ENCODE measurements at regions of chr19 and their contacts with region 1.

Region 1: DNA sequence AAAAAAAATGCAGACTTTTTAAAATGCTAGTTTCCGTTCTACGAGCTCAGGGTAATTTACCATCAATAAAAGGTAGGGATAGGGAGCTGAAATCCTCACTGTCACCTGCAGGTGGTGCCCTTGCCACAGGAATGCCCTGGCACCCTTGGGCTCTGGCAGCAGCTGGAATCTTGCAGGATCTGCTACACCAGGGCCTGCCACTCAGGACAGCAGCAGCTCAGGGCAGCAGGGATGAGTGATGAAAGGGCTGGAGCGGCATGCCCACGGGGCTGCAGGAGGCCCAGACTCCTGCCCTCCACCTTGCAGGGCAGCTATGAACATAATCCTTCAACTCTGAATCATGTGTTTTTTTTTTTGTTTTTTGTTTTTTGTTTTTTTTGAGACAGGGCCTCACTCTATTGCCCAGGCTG is 54.0 kb downstream of the GNG7 start:
- DNase-seq: peak; percentile 44
- H3K4me3 ChIP-seq: no peak overlapping the region
- H3K27ac ChIP-seq: no peak overlapping the region
- H3K27me3 ChIP-seq: peaks cover 30% of the 10 kb centered on the region
- CTCF ChIP-seq: peak; percentile 79

Region 2: DNA sequence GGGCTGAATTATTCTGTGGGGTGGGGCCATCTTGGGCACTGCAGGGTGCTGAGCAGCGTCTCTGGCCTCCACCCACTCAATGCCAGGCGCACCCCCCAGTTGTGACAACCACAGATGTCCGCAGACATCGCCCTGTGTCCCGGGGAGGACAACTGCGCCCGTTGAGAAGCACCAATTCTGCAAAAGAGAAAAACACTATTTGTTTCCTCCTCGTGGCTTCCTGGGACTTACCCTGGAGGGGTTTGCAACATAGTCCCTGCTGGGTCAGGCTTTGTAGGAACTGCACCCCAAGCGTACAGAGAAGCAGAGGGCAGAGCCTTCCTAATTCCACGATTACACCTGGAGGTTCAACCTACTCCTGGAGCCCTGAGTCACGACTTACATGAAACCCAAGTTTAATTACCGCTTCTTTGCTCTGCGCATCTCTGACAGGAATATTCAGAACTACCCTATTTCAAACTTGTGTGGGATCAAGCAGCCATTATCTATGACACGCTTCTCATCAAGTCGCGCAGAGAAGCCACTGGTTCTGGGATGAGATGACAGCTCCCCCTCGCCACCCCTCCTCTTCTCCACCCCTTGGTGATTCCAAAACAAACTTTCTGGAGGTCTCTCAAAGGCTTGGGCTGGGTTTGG is 102.4 kb after region 1 on chr19:
- CTCF ChIA-PET with region 1: interaction called, 76 read pairs
- POLR2A ChIA-PET with region 1: no interaction called
- DNase-seq: no peak
- H3K4me3 ChIP-seq: no peak overlapping the region
- H3K27ac ChIP-seq: no peak overlapping the region
- H3K27me3 ChIP-seq: no peaks in the 10 kb centered on the region
- CTCF ChIP-seq: no peak

Measured in AG04450 (cell line).